Activated B cell treated with CpG ODN at 0.5 μM for 24 hours (primary cell): ENCODE measurements at regions of chr14 and their contacts with region 1.

Region 1: DNA sequence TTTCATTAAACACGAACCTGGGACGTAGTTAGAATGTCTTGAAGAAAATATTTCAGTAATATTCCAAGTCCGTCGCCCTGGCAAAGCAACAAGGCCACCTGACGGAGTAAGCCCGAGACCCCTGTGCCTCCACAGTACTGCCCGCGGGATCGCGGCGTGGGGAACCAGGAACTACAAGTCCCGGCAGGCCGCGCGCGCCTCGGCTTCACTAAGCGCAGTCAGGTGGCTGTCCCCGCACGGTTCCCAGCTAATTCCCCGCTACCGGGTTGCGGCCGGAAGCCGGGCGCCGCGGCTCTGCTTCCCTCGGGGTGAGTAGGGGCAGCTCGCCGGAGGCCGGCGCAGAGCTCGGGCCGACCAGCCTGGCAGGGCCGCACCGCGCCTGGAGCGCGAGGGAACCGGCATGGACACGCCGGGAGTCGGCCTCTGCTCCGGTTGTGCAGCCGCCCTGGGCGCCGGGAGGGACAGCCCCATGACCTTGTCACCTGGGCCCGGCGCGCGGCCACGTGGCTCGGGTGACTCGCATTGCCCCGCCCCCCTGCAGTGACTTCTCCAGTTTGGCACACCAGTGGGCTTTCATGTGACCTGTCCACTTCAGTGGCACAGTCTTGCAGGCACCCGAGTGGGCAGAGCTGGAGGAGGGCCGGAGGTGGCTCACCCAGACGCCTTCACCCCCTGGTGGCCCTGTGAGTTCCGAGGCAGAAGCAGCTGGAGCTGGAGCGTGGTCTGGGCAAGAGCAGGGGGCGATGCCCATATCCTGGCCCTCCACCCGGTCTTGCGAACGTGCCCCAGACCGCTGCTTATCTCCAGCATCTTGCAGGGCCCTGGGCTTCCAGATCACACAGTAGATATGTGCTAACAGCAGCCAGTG is at the start of gene ADCK1:
- DNase-seq: peak; percentile 86
- ATAC-seq: peak; percentile 91
- H3K4me3 Mint-ChIP-seq: peak within 1 kb of the TSS; percentile 88
- H3K27ac Mint-ChIP-seq: peak within 1 kb of the TSS; percentile 88
- H3K4me1 Mint-ChIP-seq: peaks cover 7% of the 10 kb centered on the region
- H3K27me3 Mint-ChIP-seq: no peaks in the 10 kb centered on the region
- CTCF ChIP-seq: no peak
- total RNA-seq, gene ADCK1: 8.6 and 10.4 TPM in 2 replicates

Region 2: DNA sequence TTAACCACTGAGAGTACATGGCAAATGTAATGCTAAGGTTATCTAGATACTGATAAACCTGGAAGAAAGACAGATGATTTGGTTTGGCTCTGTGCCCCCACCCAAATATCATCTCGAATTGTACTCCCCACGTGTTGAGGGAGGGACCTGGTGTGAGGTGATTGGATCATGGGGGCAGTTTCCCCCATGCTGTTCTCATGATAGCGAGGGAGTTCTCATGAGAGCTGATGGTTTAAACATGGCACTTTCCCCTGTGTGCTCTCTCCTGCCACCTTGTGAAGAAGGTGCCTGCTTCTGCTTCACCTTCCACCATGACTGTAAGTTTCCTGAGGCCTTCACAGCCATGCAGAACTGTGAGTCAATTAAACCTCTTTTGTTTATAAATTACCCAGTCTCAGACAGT is 391.0 kb before region 1 on chr14:
- CTCF ChIA-PET with region 1: no interaction called
- POLR2A ChIA-PET with region 1: no interaction called
- intact Hi-C with region 1: no loop called
- DNase-seq: no peak
- ATAC-seq: peak; percentile 50
- H3K4me3 Mint-ChIP-seq: no peak overlapping the region
- H3K27ac Mint-ChIP-seq: no peak overlapping the region
- H3K4me1 Mint-ChIP-seq: peaks cover 5% of the 10 kb centered on the region
- H3K27me3 Mint-ChIP-seq: no peaks in the 10 kb centered on the region
- CTCF ChIP-seq: no peak

Region 3: DNA sequence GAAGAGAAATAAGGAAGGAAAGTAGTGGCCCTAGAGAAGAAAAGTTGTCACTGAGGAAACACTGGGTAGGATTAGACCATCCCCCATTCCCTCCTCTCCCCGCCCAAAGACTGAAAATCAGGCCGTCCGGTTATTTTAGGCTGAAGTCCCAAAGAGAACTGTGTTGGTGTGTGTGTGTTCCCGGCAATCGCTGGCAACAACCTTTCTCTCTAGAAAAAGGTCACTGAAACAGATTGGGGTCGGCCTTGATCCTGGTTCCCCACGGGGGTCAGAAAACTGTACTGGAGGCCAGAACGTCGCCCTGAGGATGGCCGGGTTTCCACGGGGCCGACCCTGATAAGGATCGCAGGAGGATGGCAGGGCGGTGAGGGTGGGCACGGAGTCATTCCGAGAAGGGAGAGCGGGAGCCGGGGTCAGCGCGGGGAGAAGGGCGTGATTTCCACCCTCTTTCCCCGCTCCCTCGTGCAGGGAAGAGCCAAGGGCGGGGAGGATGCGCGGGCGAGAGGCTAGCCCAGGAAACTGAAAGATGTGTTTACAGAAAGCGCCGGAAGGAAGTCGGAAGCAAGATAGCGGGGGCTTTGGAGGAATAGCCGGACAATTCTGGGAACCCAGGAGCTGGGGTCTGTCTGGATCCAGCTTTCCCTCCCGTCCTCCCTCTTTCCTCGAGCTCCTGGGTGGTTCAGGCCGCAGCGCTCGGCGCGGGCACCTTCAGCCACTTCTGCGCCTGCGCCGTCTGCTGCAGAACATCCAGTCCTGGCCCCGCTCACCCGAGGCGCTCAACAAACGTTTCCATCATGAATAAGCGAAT is 158.4 kb before region 1 on chr14:
- CTCF ChIA-PET with region 1: no interaction called
- POLR2A ChIA-PET with region 1: no interaction called
- intact Hi-C with region 1: loop called (anchors 1 kb)
- DNase-seq: peak; percentile 61
- ATAC-seq: peak; percentile 78
- H3K4me3 Mint-ChIP-seq: peak overlapping the region; percentile 95
- H3K27ac Mint-ChIP-seq: peak overlapping the region; percentile 93
- H3K4me1 Mint-ChIP-seq: peaks cover 16% of the 10 kb centered on the region
- H3K27me3 Mint-ChIP-seq: no peaks in the 10 kb centered on the region
- CTCF ChIP-seq: no peak

Region 4: GRCh38 chr14:77714926-77715325 is 85.2 kb before region 1 on chr14:
- CTCF ChIA-PET with region 1: no interaction called
- POLR2A ChIA-PET with region 1: no interaction called
- intact Hi-C with region 1: no loop called
- DNase-seq: no peak
- ATAC-seq: no peak
- H3K4me3 Mint-ChIP-seq: no peak overlapping the region
- H3K27ac Mint-ChIP-seq: no peak overlapping the region
- H3K4me1 Mint-ChIP-seq: peaks cover 14% of the 10 kb centered on the region
- H3K27me3 Mint-ChIP-seq: no peaks in the 10 kb centered on the region
- CTCF ChIP-seq: no peak

Region 5: GRCh38 chr14:77760381-77761246 is 39.5 kb before region 1 on chr14 and contains the start of gene SNW1:
- CTCF ChIA-PET with region 1: interaction called, 4 read pairs
- POLR2A ChIA-PET with region 1: interaction called, 21 read pairs
- intact Hi-C with region 1: loop called (anchors 1 kb)
- DNase-seq: peak; percentile 77
- ATAC-seq: peak; percentile 91
- H3K4me3 Mint-ChIP-seq: peak within 1 kb of the TSS; percentile 97
- H3K27ac Mint-ChIP-seq: peak within 1 kb of the TSS; percentile 97
- H3K4me1 Mint-ChIP-seq: peaks cover 37% of the 10 kb centered on the region
- H3K27me3 Mint-ChIP-seq: no peaks in the 10 kb centered on the region
- CTCF ChIP-seq: no peak
- total RNA-seq, gene SNW1: 88.2 and 89.3 TPM in 2 replicates